ENCODE measurements at regions of chr12 and their contacts with region 1.

Region 1: GRCh38 chr12:65327207-65328076 is 49.0 kb downstream of the MSRB3 start:
- DNase-seq: peak; percentile 68

Region 2: DNA sequence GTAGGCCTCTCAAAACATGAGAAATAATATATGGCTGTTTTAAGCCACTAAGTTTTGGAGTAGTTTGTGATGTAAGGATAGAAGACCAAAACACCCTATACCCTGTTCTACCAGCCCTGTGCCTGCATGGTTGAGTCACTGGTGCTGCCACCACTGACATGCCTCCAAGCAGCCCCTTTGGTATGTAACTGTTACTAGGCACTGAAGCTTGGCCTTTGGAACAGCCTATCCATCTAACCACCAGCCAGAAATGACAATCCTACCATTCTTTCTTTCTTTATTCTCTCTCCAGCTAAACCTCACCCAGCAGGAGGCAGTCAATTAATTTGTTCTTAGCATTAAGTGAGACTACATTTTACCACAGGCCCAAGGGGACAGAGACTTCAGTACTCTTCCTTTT is 191.3 kb after region 1 on chr12:
- in situ Hi-C with region 1: loop called (anchors 5 kb)
- DNase-seq: no peak

Measured in G401 (cell line).